GM12878 (cell line): ENCODE measurements at regions of chr6 and their contacts with region 1.

Region 1: DNA sequence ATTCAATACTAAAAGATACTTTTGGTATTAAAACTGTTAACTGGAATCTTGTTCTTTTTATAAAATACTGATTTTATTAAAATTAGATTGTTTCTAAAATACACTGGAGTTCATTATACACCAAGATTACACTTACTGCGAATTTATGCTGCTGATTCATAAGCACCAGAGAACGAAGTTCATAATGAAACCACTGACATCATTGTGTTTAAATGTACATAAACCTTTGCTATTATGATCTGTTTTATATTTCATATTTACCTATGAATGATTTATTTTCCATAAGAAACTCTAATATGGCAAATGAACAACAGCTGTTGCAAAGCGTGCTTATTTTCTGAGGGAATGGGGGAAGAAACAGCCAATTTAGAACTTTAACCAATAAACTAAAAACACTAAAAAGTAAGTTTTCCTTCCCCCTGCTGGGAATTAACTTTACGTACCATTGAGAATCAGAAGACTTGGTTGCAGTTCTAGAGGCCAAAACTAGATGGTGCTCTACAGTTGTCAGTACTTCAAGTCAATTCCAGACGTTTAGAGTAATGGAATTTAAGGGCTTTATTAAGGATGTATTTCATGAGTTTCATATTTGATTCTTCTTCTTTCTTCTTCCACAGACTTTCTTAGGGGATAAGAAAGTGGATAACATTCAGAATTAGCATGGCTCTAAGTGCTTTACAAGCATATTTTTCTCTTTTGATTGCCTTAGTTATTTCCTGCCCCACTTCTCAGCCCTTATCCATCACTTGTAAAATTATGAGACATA is 30.8 kb upstream of the COL19A1 start:
- DNase-seq: no peak
- ATAC-seq: peak; percentile 92
- H3K4me3 ChIP-seq: no peak overlapping the region
- H3K27ac ChIP-seq: no peak overlapping the region
- H3K4me1 ChIP-seq: peaks cover 3% of the 10 kb centered on the region; the same call in 1 of the 2 replicates
- H3K27me3 ChIP-seq: no peaks in the 10 kb centered on the region
- CTCF ChIP-seq: peak; percentile 82 to 92 (median 82)
- EP300 ChIP-seq: no peak
- POLR2A ChIP-seq: no peak
- RAD21 ChIP-seq: peak; percentile 89

Region 2: DNA sequence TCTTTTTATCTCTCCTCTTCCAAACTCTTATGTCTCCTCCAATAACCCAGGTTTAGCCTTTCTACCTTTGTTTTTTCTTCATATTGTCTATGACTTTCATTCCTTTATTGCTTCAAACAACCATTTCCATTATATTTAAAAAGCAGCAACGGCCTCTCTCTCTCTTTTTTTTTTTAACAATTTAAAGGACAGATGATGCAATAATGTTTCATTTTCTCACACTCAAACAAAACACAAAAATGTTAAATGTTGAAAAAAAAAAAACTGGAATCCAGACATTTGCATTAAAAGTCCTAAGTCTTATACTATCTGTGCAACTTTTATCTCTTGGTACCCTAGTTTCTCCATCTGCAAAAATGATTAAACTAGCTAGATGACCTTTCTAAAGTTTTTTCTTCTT is 144.6 kb before region 1 on chr6:
- CTCF ChIA-PET with region 1: no interaction called
- POLR2A ChIA-PET with region 1: no interaction called
- RAD21 ChIA-PET with region 1: no interaction called
- SMC1A ChIA-PET with region 1: no interaction called
- in situ Hi-C with region 1: no loop called
- intact Hi-C with region 1: no loop called
- DNase-seq: no peak
- ATAC-seq: no peak
- H3K4me3 ChIP-seq: no peak overlapping the region
- H3K27ac ChIP-seq: no peak overlapping the region
- H3K4me1 ChIP-seq: no peaks in the 10 kb centered on the region
- H3K27me3 ChIP-seq: no peaks in the 10 kb centered on the region
- CTCF ChIP-seq: no peak
- EP300 ChIP-seq: no peak
- POLR2A ChIP-seq: no peak
- RAD21 ChIP-seq: no peak

Region 3: DNA sequence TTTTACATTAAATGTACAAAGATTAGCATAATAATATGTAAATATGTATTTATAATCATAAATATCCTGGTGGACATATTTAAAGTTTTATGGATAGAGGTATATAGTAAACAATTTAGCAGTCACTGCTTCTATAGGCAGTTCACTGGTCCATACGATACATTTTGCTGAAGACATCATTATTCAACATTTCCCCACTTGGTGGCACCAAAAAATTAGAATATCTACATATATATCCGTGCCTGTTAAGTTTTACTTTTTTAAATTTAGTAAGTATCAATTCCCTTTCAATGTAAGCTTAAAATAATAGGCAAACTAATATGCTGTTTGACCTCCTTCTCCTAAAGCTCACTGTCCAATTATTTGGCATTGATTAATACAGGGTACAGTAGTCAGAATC is 103.0 kb before region 1 on chr6:
- CTCF ChIA-PET with region 1: interaction called, 12 read pairs
- POLR2A ChIA-PET with region 1: no interaction called
- RAD21 ChIA-PET with region 1: interaction called, 5 read pairs
- SMC1A ChIA-PET with region 1: interaction called, 6 read pairs
- in situ Hi-C with region 1: no loop called
- intact Hi-C with region 1: loop called (anchors 10 kb)
- DNase-seq: peak; percentile 11
- ATAC-seq: peak; percentile 90
- H3K4me3 ChIP-seq: no peak overlapping the region
- H3K27ac ChIP-seq: no peak overlapping the region
- H3K4me1 ChIP-seq: no peaks in the 10 kb centered on the region
- H3K27me3 ChIP-seq: no peaks in the 10 kb centered on the region
- CTCF ChIP-seq: peak; percentile 10 to 48 (median 29); a peak in 3 of 6 replicates
- EP300 ChIP-seq: no peak
- POLR2A ChIP-seq: no peak
- RAD21 ChIP-seq: peak; percentile 47

Region 4: DNA sequence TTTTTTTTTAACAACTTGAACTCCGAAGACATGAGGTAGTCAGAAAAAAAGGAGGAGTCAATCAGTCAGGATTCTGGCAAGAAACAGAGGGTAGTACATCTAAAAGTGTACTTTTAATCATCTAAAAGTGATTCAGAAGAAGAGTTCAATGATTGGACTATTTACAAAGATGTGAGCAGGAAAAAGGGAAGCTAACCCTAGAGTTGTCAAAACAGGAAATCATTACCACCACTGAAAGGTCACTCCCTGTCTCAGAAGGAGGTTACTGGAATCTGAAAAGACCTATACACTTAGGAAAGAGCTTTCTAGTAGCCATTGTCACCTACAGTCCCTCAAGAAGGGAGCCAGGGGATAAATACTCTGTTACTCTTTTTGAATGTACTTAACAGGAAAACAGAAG is 22.1 kb before region 1 on chr6:
- CTCF ChIA-PET with region 1: interaction called, 12 read pairs
- POLR2A ChIA-PET with region 1: no interaction called
- RAD21 ChIA-PET with region 1: interaction called, 11 read pairs
- SMC1A ChIA-PET with region 1: interaction called, 10 read pairs
- in situ Hi-C with region 1: no loop called
- intact Hi-C with region 1: no loop called
- DNase-seq: no peak
- ATAC-seq: peak; percentile 42
- H3K4me3 ChIP-seq: no peak overlapping the region
- H3K27ac ChIP-seq: peak overlapping the region; percentile 38
- H3K4me1 ChIP-seq: peaks cover 41% of the 10 kb centered on the region
- H3K27me3 ChIP-seq: no peaks in the 10 kb centered on the region
- CTCF ChIP-seq: no peak
- EP300 ChIP-seq: peak in 1 of 2 experiments; percentile 61; a peak in 1 of 4 replicates
- POLR2A ChIP-seq: no peak
- RAD21 ChIP-seq: no peak

Region 5: GRCh38 chr6:69866770-69867638 is 31.4 kb after region 1 on chr6:
- CTCF ChIA-PET with region 1: interaction called, 20 read pairs
- POLR2A ChIA-PET with region 1: interaction called, 3 read pairs
- RAD21 ChIA-PET with region 1: interaction called, 10 read pairs
- SMC1A ChIA-PET with region 1: interaction called, 79 read pairs
- in situ Hi-C with region 1: no loop called
- intact Hi-C with region 1: no loop called
- DNase-seq: peak; percentile 48
- ATAC-seq: peak; percentile 75
- H3K4me3 ChIP-seq: peak overlapping the region; percentile 79
- H3K27ac ChIP-seq: peak overlapping the region; percentile 92
- H3K4me1 ChIP-seq: peaks cover 7% of the 10 kb centered on the region; the same call in 1 of the 2 replicates
- H3K27me3 ChIP-seq: no peaks in the 10 kb centered on the region
- CTCF ChIP-seq: peak; percentile 26 to 31 (median 27); a peak in 4 of 6 replicates
- EP300 ChIP-seq: 0 out of 4 replicates have a peak, but pooled peaks of 1 of the 2 experiments have one; percentile 23
- POLR2A ChIP-seq: peak; percentile 87
- RAD21 ChIP-seq: peak; percentile 56

Region 6: DNA sequence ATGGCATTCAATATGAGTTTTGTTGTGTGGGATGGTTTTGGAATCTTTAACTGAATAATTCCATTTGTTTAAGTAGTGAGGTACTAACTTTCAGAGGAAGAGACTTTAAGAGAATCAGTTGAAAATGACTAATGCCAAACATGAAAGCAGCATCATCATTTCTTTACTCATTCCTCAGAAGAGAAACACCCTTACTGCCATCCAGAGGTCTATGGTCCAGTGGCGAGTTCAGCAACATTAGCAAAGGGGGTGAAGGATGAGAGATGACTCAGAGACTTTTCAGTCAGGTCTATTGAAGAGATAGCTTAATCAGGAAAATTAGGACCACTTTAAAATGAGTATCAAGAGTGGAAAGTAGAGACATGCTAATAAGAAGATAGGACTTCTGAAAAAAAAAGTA is 149.6 kb after region 1 on chr6:
- CTCF ChIA-PET with region 1: interaction called, 10 read pairs
- POLR2A ChIA-PET with region 1: no interaction called
- RAD21 ChIA-PET with region 1: interaction called, 6 read pairs
- SMC1A ChIA-PET with region 1: interaction called, 3 read pairs
- in situ Hi-C with region 1: no loop called
- intact Hi-C with region 1: loop called (anchors 10 kb)
- DNase-seq: no peak
- ATAC-seq: peak; percentile 86
- H3K4me3 ChIP-seq: no peak overlapping the region
- H3K27ac ChIP-seq: no peak overlapping the region
- H3K4me1 ChIP-seq: peaks cover 3% of the 10 kb centered on the region; the same call in 1 of the 2 replicates
- H3K27me3 ChIP-seq: no peaks in the 10 kb centered on the region
- CTCF ChIP-seq: peak in 1 of 3 experiments; percentile 27; a peak in 1 of 6 replicates
- EP300 ChIP-seq: no peak
- POLR2A ChIP-seq: no peak
- RAD21 ChIP-seq: peak; percentile 53; the same call in 1 of the 2 replicates

Region 7: GRCh38 chr6:70299456-70299855 is 463.9 kb after region 1 on chr6:
- CTCF ChIA-PET with region 1: no interaction called
- POLR2A ChIA-PET with region 1: no interaction called
- RAD21 ChIA-PET with region 1: no interaction called
- SMC1A ChIA-PET with region 1: no interaction called
- in situ Hi-C with region 1: no loop called
- intact Hi-C with region 1: no loop called
- DNase-seq: no peak
- ATAC-seq: no peak
- H3K4me3 ChIP-seq: no peak overlapping the region
- H3K27ac ChIP-seq: no peak overlapping the region
- H3K4me1 ChIP-seq: no peaks in the 10 kb centered on the region
- H3K27me3 ChIP-seq: no peaks in the 10 kb centered on the region
- CTCF ChIP-seq: no peak
- EP300 ChIP-seq: no peak
- POLR2A ChIP-seq: no peak
- RAD21 ChIP-seq: no peak